ENCODE measurements at regions of chr3 and their contacts with region 1.

Region 1: DNA sequence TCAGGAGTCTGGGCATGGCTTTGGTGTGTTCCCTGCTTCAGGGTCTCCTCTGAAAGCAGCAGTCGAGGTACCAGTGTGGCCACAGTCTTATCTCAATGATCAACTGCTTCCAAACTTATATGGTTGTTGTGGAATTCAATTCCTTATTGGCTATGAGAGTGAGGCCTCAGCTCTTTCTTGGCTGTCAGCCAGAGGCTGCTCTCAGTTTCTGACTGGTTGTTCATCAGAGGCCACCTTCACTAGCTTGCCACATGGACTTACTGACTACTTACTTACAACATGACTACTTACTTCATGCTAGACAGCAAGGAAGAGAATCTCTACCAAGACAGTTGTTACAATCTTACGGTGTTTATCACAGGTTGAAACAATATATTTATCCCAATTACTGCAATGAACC is 789.2 kb downstream of the DIPK2A start:
- DNase-seq: no peak
- ATAC-seq: no peak
- H3K4me3 Mint-ChIP-seq: no peak overlapping the region
- H3K27ac Mint-ChIP-seq: no peak overlapping the region
- H3K4me1 Mint-ChIP-seq: no peaks in the 10 kb centered on the region
- H3K27me3 Mint-ChIP-seq: peaks cover 3% of the 10 kb centered on the region

Region 2: GRCh38 chr3:144287001-144287400 is 473.8 kb before region 1 on chr3:
- CTCF ChIA-PET with region 1: no interaction called
- POLR2A ChIA-PET with region 1: no interaction called
- intact Hi-C with region 1: no loop called
- DNase-seq: no peak
- ATAC-seq: no peak
- H3K4me3 Mint-ChIP-seq: no peak overlapping the region
- H3K27ac Mint-ChIP-seq: no peak overlapping the region
- H3K4me1 Mint-ChIP-seq: no peaks in the 10 kb centered on the region
- H3K27me3 Mint-ChIP-seq: peaks cover 8% of the 10 kb centered on the region

Region 3: GRCh38 chr3:144774892-144775291 is 14.1 kb after region 1 on chr3:
- CTCF ChIA-PET with region 1: interaction called, 3 read pairs
- POLR2A ChIA-PET with region 1: no interaction called
- intact Hi-C with region 1: loop called in 1 of 2 experiments (anchors 1 kb)
- DNase-seq: no peak
- ATAC-seq: no peak
- H3K4me3 Mint-ChIP-seq: no peak overlapping the region
- H3K27ac Mint-ChIP-seq: no peak overlapping the region
- H3K4me1 Mint-ChIP-seq: no peaks in the 10 kb centered on the region
- H3K27me3 Mint-ChIP-seq: no peaks in the 10 kb centered on the region

Region 4: DNA sequence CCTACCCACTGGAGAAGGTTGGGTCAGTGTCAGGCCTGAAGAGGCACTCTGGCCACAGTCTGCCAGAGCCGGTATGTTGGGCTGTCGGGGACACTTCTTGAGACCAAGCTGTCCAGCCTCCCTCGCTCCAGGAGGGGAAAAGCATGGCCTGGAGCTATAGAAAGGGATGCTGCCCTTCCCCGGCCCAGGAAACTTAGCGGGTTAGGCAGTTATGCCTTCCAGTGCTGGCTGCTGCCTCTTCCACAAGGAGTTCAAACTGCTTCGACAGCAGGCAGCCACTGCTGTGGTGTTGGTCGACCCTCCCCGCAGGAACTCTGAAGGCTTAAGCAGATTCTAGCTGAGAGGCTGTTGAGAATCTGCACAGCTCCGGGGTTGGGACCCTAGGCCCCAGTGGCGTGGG is 30.2 kb after region 1 on chr3:
- CTCF ChIA-PET with region 1: no interaction called
- POLR2A ChIA-PET with region 1: no interaction called
- intact Hi-C with region 1: no loop called
- DNase-seq: no peak
- ATAC-seq: no peak
- H3K4me3 Mint-ChIP-seq: no peak overlapping the region
- H3K27ac Mint-ChIP-seq: no peak overlapping the region
- H3K4me1 Mint-ChIP-seq: no peaks in the 10 kb centered on the region
- H3K27me3 Mint-ChIP-seq: no peaks in the 10 kb centered on the region

Region 5: DNA sequence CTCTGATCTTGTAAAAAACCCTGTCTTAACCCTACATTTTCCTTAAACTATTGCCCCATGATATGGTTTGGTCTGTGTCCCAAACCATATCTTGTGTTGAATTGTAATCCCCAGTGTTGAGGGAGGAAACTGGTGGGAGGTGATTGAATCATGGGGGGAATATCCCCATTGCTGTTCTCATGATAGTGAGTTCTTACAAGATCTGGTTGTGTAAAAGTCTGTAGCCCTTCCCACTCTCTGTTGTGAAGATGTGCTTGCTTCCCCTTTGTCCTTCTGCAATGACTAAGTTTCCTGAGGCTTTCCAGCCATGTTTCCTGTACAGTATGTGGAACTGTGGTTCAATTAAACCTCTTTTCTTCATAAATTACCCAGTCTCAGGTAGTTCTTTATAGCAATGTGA is 92.2 kb after region 1 on chr3:
- CTCF ChIA-PET with region 1: no interaction called
- POLR2A ChIA-PET with region 1: no interaction called
- intact Hi-C with region 1: no loop called
- DNase-seq: no peak
- ATAC-seq: no peak
- H3K4me3 Mint-ChIP-seq: no peak overlapping the region
- H3K27ac Mint-ChIP-seq: no peak overlapping the region
- H3K4me1 Mint-ChIP-seq: no peaks in the 10 kb centered on the region
- H3K27me3 Mint-ChIP-seq: no peaks in the 10 kb centered on the region

Region 6: GRCh38 chr3:144866476-144866875 is 105.7 kb after region 1 on chr3:
- CTCF ChIA-PET with region 1: no interaction called
- POLR2A ChIA-PET with region 1: no interaction called
- intact Hi-C with region 1: no loop called
- DNase-seq: no peak
- ATAC-seq: no peak
- H3K4me3 Mint-ChIP-seq: no peak overlapping the region
- H3K27ac Mint-ChIP-seq: no peak overlapping the region
- H3K4me1 Mint-ChIP-seq: no peaks in the 10 kb centered on the region
- H3K27me3 Mint-ChIP-seq: no peaks in the 10 kb centered on the region